ENCODE measurements at regions of chr6 and their contacts with region 1.

Region 1: DNA sequence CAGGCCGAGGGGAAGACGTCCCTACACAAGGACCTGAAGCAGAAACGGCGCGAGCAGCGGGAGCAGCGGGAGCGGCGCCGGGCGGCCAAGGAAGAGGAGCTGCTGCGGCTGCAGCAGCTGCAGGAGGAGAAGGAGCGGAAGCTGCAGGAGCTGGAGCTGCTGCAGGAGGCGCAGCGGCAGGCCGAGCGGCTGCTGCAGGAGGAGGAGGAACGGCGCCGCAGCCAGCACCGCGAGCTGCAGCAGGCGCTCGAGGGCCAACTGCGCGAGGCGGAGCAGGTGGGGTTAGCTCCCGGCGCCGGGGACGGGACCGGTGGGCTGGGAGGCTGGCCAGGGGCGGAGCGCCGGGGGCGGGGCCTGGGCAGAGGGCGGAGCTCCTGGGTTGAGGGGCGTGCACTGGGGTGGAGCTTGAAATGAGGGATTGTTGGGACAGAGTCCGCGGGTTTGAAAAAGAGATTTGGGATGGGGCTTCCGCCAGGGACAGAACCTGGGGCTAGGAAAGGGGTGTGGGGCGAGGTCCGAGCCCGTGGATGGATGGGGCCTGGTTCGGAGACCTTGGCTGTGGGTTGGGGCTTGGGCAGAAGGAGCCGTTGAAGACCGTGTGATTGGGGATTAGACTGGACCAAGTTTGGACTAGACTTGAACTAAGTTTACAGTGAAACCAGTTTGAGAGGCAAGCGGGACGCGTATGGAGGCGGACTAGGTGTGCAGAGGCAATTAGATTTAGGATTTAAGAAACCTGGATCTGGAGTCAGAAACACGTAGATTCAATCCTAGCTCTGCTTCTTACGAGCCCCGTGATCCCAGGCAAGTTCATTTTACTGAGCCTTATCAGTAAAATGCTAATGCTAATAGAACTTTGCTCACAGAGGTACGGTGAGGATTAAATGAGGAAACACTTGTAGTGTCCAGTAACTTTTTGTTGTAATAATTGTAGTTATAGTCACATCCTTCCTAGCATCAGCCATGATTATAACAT is 20.9 kb downstream of the DEF6 start:
- DNase-seq: no peak
- ATAC-seq: no peak
- H3K4me3 ChIP-seq: no peak overlapping the region
- H3K4me3 Mint-ChIP-seq: no peak overlapping the region
- H3K27ac ChIP-seq: no peak overlapping the region
- H3K27ac Mint-ChIP-seq: no peak overlapping the region
- H3K4me1 ChIP-seq: peaks cover 0 to 1% of the 10 kb centered on the region in 2 donors
- H3K4me1 Mint-ChIP-seq: peaks cover 14% of the 10 kb centered on the region
- H3K27me3 ChIP-seq: no peaks in the 10 kb centered on the region
- H3K27me3 Mint-ChIP-seq: no peaks in the 10 kb centered on the region
- CTCF ChIP-seq: no peak

Region 2: GRCh38 chr6:35391240-35391968 is 72.9 kb after region 1 on chr6:
- CTCF ChIA-PET with region 1: no interaction called
- POLR2A ChIA-PET with region 1: no interaction called
- intact Hi-C with region 1: no loop called
- DNase-seq: no peak
- ATAC-seq: no peak
- H3K4me3 ChIP-seq: no peak overlapping the region
- H3K4me3 Mint-ChIP-seq: no peak overlapping the region
- H3K27ac ChIP-seq: no peak overlapping the region
- H3K27ac Mint-ChIP-seq: peak overlapping the region; percentile 26
- H3K4me1 ChIP-seq: peaks cover 20 to 34% of the 10 kb centered on the region in 2 donors
- H3K4me1 Mint-ChIP-seq: peaks cover 46% of the 10 kb centered on the region
- H3K27me3 ChIP-seq: no peaks in the 10 kb centered on the region
- H3K27me3 Mint-ChIP-seq: no peaks in the 10 kb centered on the region
- CTCF ChIP-seq: no peak

Region 3: GRCh38 chr6:35419417-35419816 is 100.9 kb after region 1 on chr6:
- CTCF ChIA-PET with region 1: no interaction called
- POLR2A ChIA-PET with region 1: interaction called, 15 read pairs
- intact Hi-C with region 1: no loop called
- DNase-seq: no peak
- ATAC-seq: no peak
- H3K4me3 ChIP-seq: no peak overlapping the region
- H3K4me3 Mint-ChIP-seq: no peak overlapping the region
- H3K27ac ChIP-seq: no peak overlapping the region
- H3K27ac Mint-ChIP-seq: no peak overlapping the region
- H3K4me1 ChIP-seq: peaks cover 3 to 11% of the 10 kb centered on the region in 2 donors
- H3K4me1 Mint-ChIP-seq: peaks cover 13% of the 10 kb centered on the region
- H3K27me3 ChIP-seq: no peaks in the 10 kb centered on the region
- H3K27me3 Mint-ChIP-seq: no peaks in the 10 kb centered on the region
- CTCF ChIP-seq: no peak